ENCODE measurements at regions of chr13 and their contacts with region 1.

Region 1: GRCh38 chr13:90889906-90890834 is 457.3 kb upstream of the MIR17HG start:
- DNase-seq: no peak
- ATAC-seq: no peak
- H3K4me3 ChIP-seq: no peak overlapping the region
- H3K27ac ChIP-seq: no peak overlapping the region
- H3K4me1 ChIP-seq: no peaks in the 10 kb centered on the region
- H3K27me3 ChIP-seq: no peaks in the 10 kb centered on the region
- CTCF ChIP-seq: no peak
- POLR2A ChIP-seq: no peak
- RAD21 ChIP-seq: no peak

Region 2: DNA sequence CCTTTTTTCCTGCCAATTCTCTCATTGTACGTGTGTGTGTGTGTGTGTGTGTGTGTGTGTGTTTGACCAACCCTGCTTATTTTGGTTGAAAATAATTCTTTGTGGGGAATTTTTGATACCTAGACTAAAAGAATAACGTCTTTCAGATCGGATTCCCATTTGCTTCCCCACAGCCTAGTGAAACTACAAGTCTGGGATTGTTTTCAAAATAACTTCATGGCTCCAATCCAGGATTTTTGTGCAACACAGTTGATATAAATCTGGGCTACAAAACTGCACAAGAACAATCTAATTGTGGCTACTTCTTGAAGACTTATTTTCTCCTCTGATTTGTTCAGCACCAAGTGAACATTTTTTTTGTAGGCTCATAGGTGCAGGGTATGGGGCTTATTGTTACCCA is 124.5 kb after region 1 on chr13:
- CTCF ChIA-PET with region 1: no interaction called
- POLR2A ChIA-PET with region 1: no interaction called
- dilution Hi-C with region 1: no loop called
- in situ Hi-C with region 1: no loop called
- intact Hi-C with region 1: loop called (anchors 2 kb)
- DNase-seq: no peak
- ATAC-seq: no peak
- H3K4me3 ChIP-seq: no peak overlapping the region
- H3K27ac ChIP-seq: no peak overlapping the region
- H3K4me1 ChIP-seq: no peaks in the 10 kb centered on the region
- H3K27me3 ChIP-seq: no peaks in the 10 kb centered on the region
- CTCF ChIP-seq: no peak
- POLR2A ChIP-seq: no peak
- RAD21 ChIP-seq: no peak